A549 (cell line): ENCODE measurements at regions of chr14 and their contacts with region 1.

Region 1: DNA sequence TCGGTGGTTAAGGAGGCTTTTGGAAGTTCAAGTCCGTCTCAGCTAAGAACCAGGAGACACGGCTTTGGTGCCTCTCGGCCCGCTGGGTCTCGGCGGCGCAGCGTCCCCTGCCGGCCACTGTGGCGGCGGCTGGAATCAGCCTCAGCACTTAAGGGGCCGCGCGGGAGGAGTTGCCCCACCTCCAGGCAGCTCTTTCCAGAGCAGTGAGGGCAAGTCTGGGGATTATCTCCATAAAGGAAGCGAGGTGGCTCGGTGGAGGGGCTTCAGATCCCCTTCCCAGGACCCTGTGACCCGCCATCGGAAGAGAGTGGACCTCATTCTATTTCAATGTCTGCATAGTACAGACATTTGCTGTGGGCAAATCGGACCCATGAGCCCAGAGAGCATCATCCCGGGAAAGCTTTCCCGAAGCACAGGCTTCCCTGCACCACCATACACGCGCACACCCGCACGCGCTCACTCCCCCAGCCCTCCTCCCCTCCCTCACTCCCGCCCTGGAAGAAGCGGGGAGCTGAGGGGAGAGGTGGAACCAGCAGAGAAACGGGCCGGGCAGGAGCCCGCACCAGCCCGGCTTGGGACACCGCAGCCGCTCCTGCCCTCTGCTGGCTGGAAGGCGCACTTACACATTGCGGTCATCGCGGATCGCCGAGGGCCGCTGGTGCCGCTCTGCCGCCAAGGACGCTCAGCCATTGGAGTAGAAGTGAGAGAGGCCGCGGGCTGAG is 15.9 kb downstream of the RNASE2 start:
- DNase-seq: peak; percentile 76 to 87
- ATAC-seq: peak; percentile 93 to 95
- H3K4me3 ChIP-seq: peak overlapping the region; percentile 67
- H3K27ac ChIP-seq: peak overlapping the region; percentile 89 to 90
- H3K4me1 ChIP-seq: peaks cover 19% of the 10 kb centered on the region
- CTCF ChIP-seq: peak; percentile 86
- EP300 ChIP-seq: no peak
- POLR2A ChIP-seq: peak; percentile 47; the same call in 1 of the 2 replicates
- RAD21 ChIP-seq: peak; percentile 63 to 64

Region 2: GRCh38 chr14:20690848-20691523 is 280.2 kb before region 1 on chr14:
- CTCF ChIA-PET with region 1: interaction called, 61 read pairs
- POLR2A ChIA-PET with region 1: no interaction called
- DNase-seq: peak; percentile 71 to 81
- ATAC-seq: peak; percentile 82 to 84
- H3K4me3 ChIP-seq: peak overlapping the region; percentile 5; the same call in 1 of the 3 replicates
- H3K27ac ChIP-seq: peak overlapping the region; percentile 2 to 26; a peak in 1 of 6 replicates
- H3K4me1 ChIP-seq: peaks cover 34% of the 10 kb centered on the region
- CTCF ChIP-seq: peak; percentile 88
- EP300 ChIP-seq: no peak
- POLR2A ChIP-seq: no peak
- RAD21 ChIP-seq: peak; percentile 88 to 92

Region 3: DNA sequence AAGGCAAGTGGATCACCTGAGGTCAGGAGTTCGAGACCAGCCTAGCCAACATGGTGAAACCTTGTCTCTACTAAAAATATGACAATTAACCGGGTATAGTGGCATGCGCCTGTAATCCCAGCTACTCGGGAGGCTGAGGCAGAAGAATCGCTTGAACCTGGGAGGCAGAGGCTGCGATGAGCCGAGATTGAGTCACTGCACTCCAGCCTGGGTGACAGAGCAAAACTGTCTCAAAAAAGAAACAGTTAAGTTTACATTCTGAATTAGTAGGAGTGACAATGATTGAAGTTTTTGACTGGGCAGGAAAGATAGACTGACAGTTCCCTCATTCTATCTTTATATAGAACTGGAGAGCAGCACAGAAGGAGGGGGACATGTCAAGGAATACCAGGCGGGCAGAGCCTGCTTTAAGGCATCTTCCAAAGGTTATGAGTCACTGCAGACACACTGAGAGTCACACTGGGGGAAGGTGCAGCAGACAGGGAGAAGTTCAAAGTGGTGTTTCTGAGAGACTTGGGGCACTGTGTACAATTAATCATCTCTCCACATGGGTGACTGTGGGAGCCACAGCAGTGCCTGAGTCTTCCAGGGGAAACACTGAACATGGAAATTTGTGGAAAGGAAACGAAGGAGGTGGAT is 122.7 kb before region 1 on chr14:
- CTCF ChIA-PET with region 1: interaction called, 13 read pairs
- POLR2A ChIA-PET with region 1: interaction called, 10 read pairs
- DNase-seq: peak; percentile 84 to 94
- ATAC-seq: peak; percentile 97 to 99
- H3K4me3 ChIP-seq: peak overlapping the region; percentile 31; the same call in 2 of the 3 replicates
- H3K27ac ChIP-seq: peak overlapping the region; percentile 94 to 96
- H3K4me1 ChIP-seq: peaks cover 40% of the 10 kb centered on the region
- CTCF ChIP-seq: no peak
- EP300 ChIP-seq: peak; percentile 33 to 39; a peak in 1 of 5 replicates
- POLR2A ChIP-seq: no peak
- RAD21 ChIP-seq: 0 out of 5 replicates have a peak, but pooled peaks of 1 of the 2 experiments have one; percentile 7

Region 4: DNA sequence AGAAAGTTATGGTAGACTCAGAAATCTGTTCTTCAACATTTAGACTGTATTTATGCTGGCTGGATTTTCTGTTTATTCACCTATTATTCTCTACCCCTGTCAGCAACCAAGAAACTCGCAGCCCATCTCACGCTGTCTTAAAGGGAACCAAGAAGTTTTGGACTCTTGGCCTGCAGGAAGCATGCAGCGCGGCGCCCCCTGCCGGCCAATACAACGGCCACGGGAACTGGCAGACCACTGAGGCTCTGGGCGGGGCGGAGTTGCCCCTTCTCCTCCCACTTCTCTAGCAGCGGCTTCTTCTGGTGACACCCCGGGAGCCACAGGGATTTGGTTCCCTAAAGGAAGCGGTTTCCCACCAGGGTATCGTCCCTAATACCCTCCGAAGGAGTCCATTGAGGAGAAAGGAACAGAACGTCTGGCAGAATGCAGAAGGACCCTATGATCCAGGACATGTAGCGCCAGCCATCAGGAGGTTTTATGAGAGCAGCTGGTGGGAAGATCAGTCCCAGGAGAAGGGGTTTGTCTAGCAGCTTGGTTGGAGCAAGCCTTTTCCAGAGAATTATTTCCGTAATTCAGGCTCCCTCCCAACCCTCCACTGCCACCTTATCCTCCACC is 36.9 kb before region 1 on chr14:
- CTCF ChIA-PET with region 1: interaction called, 10 read pairs
- POLR2A ChIA-PET with region 1: no interaction called
- DNase-seq: peak; percentile 19 to 48
- ATAC-seq: peak in 1 of 2 experiments; percentile 88; a peak in 3 of 6 replicates
- H3K4me3 ChIP-seq: no peak overlapping the region
- H3K27ac ChIP-seq: no peak overlapping the region
- H3K4me1 ChIP-seq: no peaks in the 10 kb centered on the region
- CTCF ChIP-seq: peak; percentile 30; the same call in 1 of the 3 replicates
- EP300 ChIP-seq: no peak
- POLR2A ChIP-seq: no peak
- RAD21 ChIP-seq: peak in 1 of 2 experiments; percentile 21; a peak in 1 of 5 replicates

Region 5: DNA sequence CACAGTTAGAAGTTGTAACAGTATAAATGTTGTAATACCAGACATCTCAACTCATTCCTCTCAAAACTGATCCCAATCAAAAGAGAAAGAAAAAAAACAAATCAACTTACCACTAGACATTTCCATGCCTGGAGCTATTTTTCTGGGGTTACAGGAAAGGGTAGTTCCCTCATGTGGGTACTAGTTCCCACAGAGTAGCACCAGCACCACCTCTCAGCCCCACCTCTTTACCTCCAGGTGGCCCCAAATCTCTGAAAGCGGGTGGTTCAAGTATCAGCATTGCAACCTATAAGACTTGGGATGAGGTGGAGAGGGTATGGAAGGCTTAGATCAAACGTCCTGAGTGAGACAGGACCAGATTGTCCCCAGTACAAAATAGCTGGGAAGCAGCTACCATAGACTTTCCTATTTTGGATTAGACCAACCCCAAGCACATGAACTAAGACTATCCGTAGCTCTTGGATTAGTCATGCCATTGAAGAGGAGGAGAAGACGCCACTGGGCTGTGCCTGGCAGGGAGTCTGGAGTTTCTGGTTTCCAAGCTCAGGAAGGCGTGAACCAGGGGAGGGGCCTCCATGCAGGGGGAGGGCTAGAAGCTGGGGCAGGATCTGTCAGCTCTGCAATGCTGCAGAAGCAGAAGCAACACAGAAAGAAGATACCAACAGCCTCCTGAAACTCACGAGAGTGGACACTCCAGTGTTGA is 27.7 kb after region 1 on chr14 and contains the start of gene SLC39A2:
- CTCF ChIA-PET with region 1: interaction called, 186 read pairs
- POLR2A ChIA-PET with region 1: no interaction called
- DNase-seq: no peak
- ATAC-seq: peak in 1 of 2 experiments; percentile 65; a peak in 2 of 6 replicates
- H3K4me3 ChIP-seq: no peak within 1 kb of the TSS
- H3K27ac ChIP-seq: no peak within 1 kb of the TSS
- H3K4me1 ChIP-seq: no peaks in the 10 kb centered on the region
- CTCF ChIP-seq: no peak
- EP300 ChIP-seq: no peak
- POLR2A ChIP-seq: no peak
- RAD21 ChIP-seq: no peak
- polyA plus RNA-seq, gene SLC39A2: 0.09 TPM in 1 of 2 replicates, not detected in the other

Region 6: GRCh38 chr14:21039585-21040369 is 68.6 kb after region 1 on chr14:
- CTCF ChIA-PET with region 1: interaction called, 23 read pairs
- POLR2A ChIA-PET with region 1: interaction called, 5 read pairs
- DNase-seq: peak; percentile 63 to 66
- ATAC-seq: peak; percentile 85 to 94
- H3K4me3 ChIP-seq: no peak overlapping the region
- H3K27ac ChIP-seq: no peak overlapping the region
- H3K4me1 ChIP-seq: no peaks in the 10 kb centered on the region
- CTCF ChIP-seq: peak; percentile 71
- EP300 ChIP-seq: no peak
- POLR2A ChIP-seq: no peak
- RAD21 ChIP-seq: peak; percentile 81 to 82

Region 7: DNA sequence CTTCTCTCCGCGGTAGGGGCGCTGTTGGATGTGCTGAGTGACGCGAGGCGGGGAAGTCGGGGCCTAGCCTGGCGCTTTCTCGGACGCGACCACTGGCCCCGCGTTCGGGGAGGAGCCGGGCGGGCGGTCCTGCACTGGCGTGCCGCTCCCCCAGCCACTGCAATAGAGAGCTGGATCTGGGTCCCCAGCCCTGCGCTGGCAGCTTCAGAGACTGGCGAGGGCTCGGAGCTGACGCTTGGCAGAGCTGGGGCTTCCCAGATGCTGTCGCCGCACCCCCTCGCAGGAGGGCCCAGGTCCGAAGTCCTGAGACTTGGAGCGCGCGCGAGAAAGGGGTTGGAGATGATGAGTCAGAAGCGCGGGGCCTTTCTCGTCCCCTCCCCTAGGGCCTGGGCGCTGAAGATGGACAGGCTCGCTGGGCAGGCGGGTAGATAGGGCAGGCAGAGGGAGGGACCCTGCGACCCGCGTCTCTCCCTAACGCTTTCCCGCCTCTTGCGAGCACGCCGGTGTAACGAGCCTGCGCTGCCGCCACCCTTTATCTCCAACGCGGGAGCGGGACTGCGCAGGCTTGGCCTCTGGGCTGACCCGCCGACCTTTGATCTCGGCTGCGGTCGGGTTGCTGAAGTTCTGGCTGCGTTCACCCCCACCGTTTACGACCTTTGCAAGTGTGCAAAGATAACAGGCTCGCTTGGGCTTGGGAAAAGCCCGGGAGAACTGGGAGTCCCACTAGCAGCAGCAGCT is 132.7 kb after region 1 on chr14:
- CTCF ChIA-PET with region 1: interaction called, 14 read pairs
- POLR2A ChIA-PET with region 1: no interaction called
- DNase-seq: peak; percentile 93 to 98
- ATAC-seq: peak; percentile 82 to 91
- H3K4me3 ChIP-seq: peak overlapping the region; percentile 57
- H3K27ac ChIP-seq: peak overlapping the region; percentile 96 to 97
- H3K4me1 ChIP-seq: peaks cover 81% of the 10 kb centered on the region
- CTCF ChIP-seq: peak; percentile 56
- EP300 ChIP-seq: 0 out of 5 replicates have a peak, but pooled peaks of 1 of the 2 experiments have one; percentile 15
- POLR2A ChIP-seq: peak; percentile 86
- RAD21 ChIP-seq: peak; percentile 10 to 20; a peak in 1 of 5 replicates

Region 8: DNA sequence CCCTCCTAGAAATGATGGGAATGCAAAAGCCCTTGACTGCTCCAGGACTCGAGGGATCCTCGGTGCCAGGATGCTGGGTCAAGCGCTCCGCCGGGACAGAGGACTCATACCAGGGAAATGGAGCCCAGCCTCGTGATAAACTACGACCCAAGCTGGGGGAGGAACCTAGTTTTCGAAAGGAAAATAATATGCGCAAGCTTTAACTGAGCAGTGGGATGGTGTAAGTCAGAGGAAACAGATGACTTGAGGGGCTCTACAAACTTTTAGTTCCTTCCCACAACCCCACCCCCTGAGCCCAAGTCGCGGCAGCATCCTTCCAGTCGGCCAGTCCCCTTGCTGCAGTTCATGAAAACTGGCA is 413.3 kb after region 1 on chr14:
- CTCF ChIA-PET with region 1: no interaction called
- POLR2A ChIA-PET with region 1: no interaction called
- DNase-seq: no peak
- ATAC-seq: peak in 1 of 2 experiments; percentile 30; a peak in 2 of 6 replicates
- H3K4me3 ChIP-seq: peak overlapping the region; percentile 71
- H3K27ac ChIP-seq: peak overlapping the region; percentile 91 to 97
- H3K4me1 ChIP-seq: peaks cover 27% of the 10 kb centered on the region
- CTCF ChIP-seq: no peak
- EP300 ChIP-seq: no peak
- POLR2A ChIP-seq: no peak
- RAD21 ChIP-seq: no peak